Ascending aorta (tissue), 2 donors: ENCODE measurements at regions of chr19 and their contacts with region 1.

Region 1: GRCh38 chr19:49766007-49766937 is 529 bp upstream of the AP2A1 start:
- DNase-seq: peak; percentile 99 to 100
- H3K4me3 ChIP-seq: peak overlapping the region; percentile 73 to 82
- H3K27ac ChIP-seq: peak overlapping the region; percentile 80 to 87
- H3K4me1 ChIP-seq: peaks cover 10 to 16% of the 10 kb centered on the region in 2 donors
- H3K27me3 ChIP-seq: no peaks in the 10 kb centered on the region
- CTCF ChIP-seq: no peak

Region 2: GRCh38 chr19:49487277-49488045 is 278.8 kb before region 1 on chr19 and contains the start of gene RPL13A:
- intact Hi-C with region 1: loop called (anchors 1 kb)
- DNase-seq: peak; percentile 97 to 100
- H3K4me3 ChIP-seq: peak within 1 kb of the TSS; percentile 57 to 97
- H3K27ac ChIP-seq: peak within 1 kb of the TSS; percentile 73 to 83
- H3K4me1 ChIP-seq: peaks cover 10 to 20% of the 10 kb centered on the region in 2 donors
- H3K27me3 ChIP-seq: no peaks in the 10 kb centered on the region
- CTCF ChIP-seq: no peak
- total RNA-seq, gene RPL13A: 2,737 TPM

Region 3: GRCh38 chr19:49590071-49590970 is 176.0 kb before region 1 on chr19:
- intact Hi-C with region 1: loop called (anchors 5 kb)
- DNase-seq: peak; percentile 87 to 97
- H3K4me3 ChIP-seq: peak overlapping the region; percentile 81 to 91
- H3K27ac ChIP-seq: peak overlapping the region; percentile 82 to 87
- H3K4me1 ChIP-seq: peaks cover 2 to 12% of the 10 kb centered on the region in 2 donors
- H3K27me3 ChIP-seq: no peaks in the 10 kb centered on the region
- CTCF ChIP-seq: peak in 1 of 3 experiments; percentile 6

Region 4: DNA sequence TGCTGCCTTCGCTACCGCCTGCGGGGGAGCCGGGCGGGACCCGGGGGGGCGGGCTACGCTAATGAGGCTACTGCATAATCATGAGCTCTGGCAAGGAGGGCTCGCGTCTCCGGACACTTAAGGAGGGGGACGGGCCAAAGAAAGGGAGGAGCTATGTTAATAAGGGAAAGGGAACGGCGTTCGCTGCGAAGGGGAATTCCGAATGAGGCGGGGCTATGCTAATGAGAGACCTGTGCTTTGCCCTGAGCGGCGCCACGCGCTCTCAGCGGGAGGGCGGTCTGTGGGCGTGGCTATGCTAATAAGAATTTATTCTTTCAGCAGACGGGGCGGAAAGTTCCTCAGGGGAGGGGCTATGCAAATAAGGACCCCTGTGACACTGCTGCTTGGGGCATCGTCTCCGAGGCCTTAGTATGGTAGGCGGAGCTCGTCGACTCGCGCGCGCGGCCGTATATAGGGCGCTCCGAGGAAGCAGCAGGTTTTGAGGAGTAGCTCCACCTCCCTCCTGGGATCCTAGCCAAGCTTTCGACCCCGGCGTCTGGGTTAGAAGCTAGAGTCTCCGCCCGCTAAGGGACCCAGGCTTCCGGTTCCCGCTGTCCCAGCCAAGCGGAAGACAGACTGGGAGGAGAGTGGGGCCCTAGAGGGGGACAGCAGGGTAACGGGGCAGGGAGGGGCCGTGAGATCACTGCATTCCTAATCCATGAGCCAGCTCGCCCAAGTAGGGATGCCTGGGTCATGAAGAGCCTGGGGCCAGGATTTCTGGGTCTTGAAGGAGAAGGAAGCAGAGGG is 126.0 kb before region 1 on chr19 and contains the start of gene RRAS:
- intact Hi-C with region 1: loop called (anchors 1 kb)
- DNase-seq: peak; percentile 99 to 100
- H3K4me3 ChIP-seq: peak within 1 kb of the TSS; percentile 80 to 87
- H3K27ac ChIP-seq: peak within 1 kb of the TSS; percentile 99 to 100
- H3K4me1 ChIP-seq: peaks cover 20 to 24% of the 10 kb centered on the region in 2 donors
- H3K27me3 ChIP-seq: no peaks in the 10 kb centered on the region
- CTCF ChIP-seq: no peak
- total RNA-seq, gene RRAS: 161 TPM

Region 5: DNA sequence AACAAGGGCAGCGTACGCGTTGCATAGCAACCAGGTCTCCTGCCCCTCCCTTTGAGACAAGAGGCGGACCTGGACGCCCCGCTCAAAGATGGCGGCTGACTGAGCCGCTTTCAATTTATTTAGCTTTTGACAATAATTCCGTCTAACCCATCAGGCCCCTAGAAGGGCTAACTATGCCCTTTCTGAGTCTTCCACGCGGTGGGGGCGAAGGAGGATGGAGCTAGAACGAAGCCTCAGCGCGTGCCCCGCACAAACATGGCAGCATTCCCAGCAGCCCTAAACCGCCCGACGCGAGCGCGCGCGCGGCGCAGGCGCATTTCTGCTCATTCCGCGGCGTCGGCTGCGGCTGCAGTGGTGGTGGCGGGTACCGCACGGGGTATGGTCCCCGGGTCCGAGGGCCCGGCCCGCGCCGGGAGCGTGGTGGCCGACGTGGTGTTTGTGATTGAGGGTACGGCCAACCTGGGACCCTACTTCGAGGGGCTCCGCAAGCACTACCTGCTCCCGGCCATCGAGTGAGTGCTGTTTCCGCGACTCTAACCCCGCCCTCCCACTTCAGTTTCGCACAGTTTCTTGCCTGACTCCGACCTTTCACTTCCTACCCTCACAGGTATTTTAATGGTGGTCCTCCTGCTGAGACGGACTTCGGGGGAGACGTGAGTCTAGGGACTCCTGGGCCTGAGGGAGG is 51.8 kb after region 1 on chr19 and contains the start of gene MED25:
- intact Hi-C with region 1: loop called (anchors 1 kb)
- DNase-seq: peak; percentile 30 to 92
- H3K4me3 ChIP-seq: peak within 1 kb of the TSS; percentile 78 to 85
- H3K27ac ChIP-seq: peak within 1 kb of the TSS; percentile 93 to 97
- H3K4me1 ChIP-seq: peaks cover 0 to 24% of the 10 kb centered on the region in 2 donors
- H3K27me3 ChIP-seq: no peaks in the 10 kb centered on the region
- CTCF ChIP-seq: peak; percentile 29 to 89 (median 33)
- total RNA-seq, gene MED25: 54.0 TPM

Region 6: GRCh38 chr19:49850473-49851342 is 84.4 kb after region 1 on chr19 and contains the start of gene PTOV1:
- intact Hi-C with region 1: loop called (anchors 1 kb)
- DNase-seq: peak; percentile 51 to 96
- H3K4me3 ChIP-seq: peak within 1 kb of the TSS; percentile 85 to 90
- H3K27ac ChIP-seq: peak within 1 kb of the TSS; percentile 99 to 100
- H3K4me1 ChIP-seq: peaks cover 4 to 10% of the 10 kb centered on the region in 2 donors
- H3K27me3 ChIP-seq: no peaks in the 10 kb centered on the region
- CTCF ChIP-seq: peak in 1 of 3 experiments; percentile 4
- total RNA-seq, gene PTOV1: 163 TPM

Region 7: DNA sequence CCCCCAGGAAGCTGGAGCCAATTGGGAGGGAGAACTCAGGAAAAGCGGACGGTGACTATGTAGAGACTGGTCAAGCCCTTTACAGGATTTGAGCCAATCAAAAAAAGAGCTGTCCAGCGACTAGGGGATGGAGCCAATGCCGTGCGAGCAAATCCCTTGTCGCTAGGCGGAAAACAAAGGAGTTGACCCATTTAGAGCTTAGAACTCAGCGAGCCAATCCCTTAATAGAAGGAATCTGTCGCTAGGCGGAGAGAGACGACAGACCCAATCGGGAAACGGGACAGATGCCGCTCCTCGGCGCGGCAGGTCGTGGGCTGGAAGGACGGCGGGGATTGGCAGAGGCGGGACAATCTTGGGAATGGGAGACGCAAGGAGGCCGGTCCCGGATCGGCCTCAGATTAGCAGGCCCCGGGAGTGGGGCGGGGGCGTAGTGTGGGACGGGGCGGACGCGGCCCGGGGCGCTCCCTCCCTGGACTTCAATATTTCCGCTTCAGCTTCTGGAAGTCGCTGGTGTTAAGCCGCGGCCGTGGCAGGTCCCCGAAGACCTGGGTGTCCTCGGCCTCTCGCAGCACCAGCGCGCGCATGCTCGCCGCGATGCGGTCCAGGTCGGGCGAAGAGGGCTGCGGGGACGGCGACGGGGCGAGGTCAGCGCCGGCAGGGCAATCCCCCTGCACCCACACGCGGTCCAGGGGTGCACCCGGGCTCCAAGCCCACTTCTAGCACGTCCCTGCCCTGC is 103.3 kb after region 1 on chr19:
- intact Hi-C with region 1: loop called (anchors 1 kb)
- DNase-seq: peak; percentile 95 to 98
- H3K4me3 ChIP-seq: peak overlapping the region; percentile 72 to 74
- H3K27ac ChIP-seq: peak overlapping the region; percentile 93 to 97
- H3K4me1 ChIP-seq: peaks cover 19 to 32% of the 10 kb centered on the region in 2 donors
- H3K27me3 ChIP-seq: no peaks in the 10 kb centered on the region
- CTCF ChIP-seq: no peak